ENCODE measurements at regions of chr1 and their contacts with region 1.

Region 1: GRCh38 chr1:231603598-231604275 is 22.9 kb upstream of the DISC1 start:
- DNase-seq: peak in 1 of 2 experiments; percentile 55
- H3K4me3 ChIP-seq: peak overlapping the region in 1 of 4 experiments; percentile 44; a peak in 2 of 8 replicates
- H3K27ac ChIP-seq: no peak overlapping the region
- H3K4me1 ChIP-seq: peaks cover 0 to 4% (median under 1%) of the 10 kb centered on the region in 4 experiments; a peak in 1 of 7 replicates
- H3K27me3 ChIP-seq: no peaks in the 10 kb centered on the region; a peak in 1 of 7 replicates
- CTCF ChIP-seq: peak in 2 of 3 experiments; percentile 59 to 61; a peak in 3 of 4 replicates
- EP300 ChIP-seq: no peak
- POLR2A ChIP-seq: no peak
- RAD21 ChIP-seq: peak; percentile 80 to 81

Region 2: DNA sequence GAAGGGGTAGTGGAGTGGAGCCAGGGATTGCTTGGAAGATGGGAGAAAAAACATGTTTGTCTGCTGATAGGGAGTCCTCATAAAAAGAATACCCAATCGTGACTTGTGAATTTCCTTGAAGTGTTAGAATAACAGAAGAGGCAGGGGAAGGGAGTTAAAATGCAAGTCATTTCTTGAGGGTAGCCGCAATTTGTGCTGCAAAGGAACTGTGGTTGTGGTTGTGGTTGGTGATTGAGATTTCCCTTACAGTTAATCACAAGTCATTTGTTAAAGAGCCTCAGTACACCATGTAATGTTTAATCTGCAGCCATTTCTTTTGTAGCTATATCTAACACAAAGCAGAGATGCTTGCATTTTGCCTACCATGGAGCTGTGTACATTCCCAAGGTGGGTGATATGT is 143.1 kb before region 1 on chr1:
- CTCF ChIA-PET with region 1: no interaction called
- POLR2A ChIA-PET with region 1: no interaction called
- DNase-seq: no peak
- H3K4me3 ChIP-seq: no peak overlapping the region
- H3K27ac ChIP-seq: no peak overlapping the region
- H3K4me1 ChIP-seq: no peaks in the 10 kb centered on the region
- H3K27me3 ChIP-seq: no peaks in the 10 kb centered on the region
- CTCF ChIP-seq: no peak
- EP300 ChIP-seq: no peak
- POLR2A ChIP-seq: no peak
- RAD21 ChIP-seq: no peak

Region 3: DNA sequence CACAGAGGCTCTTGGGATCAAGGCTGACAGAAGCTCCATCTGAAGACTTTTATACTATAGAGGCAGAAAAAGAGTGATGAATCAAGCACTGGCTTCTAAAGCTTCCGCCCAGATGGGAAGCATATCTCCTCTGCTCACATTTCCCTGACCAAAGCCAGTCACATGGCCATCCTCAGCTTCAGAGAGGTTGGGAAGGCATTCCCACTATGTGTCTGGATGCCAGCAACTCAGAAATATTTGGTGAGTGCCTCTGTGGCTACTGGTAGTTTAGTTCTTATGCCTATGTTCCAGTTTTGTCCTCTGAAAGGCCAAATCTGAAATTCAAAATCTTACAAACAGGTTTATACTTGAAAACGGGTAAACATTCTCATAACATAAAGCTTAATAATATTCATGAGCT is 12.9 kb after region 1 on chr1:
- CTCF ChIA-PET with region 1: interaction called, 12 read pairs
- POLR2A ChIA-PET with region 1: interaction called, 3 read pairs
- DNase-seq: no peak
- H3K4me3 ChIP-seq: no peak overlapping the region
- H3K27ac ChIP-seq: no peak overlapping the region
- H3K4me1 ChIP-seq: no peaks in the 10 kb centered on the region
- H3K27me3 ChIP-seq: no peaks in the 10 kb centered on the region; a peak in 2 of 7 replicates
- CTCF ChIP-seq: no peak
- EP300 ChIP-seq: no peak
- POLR2A ChIP-seq: no peak
- RAD21 ChIP-seq: no peak